ENCODE measurements at regions of chr5 and their contacts with region 1.

Region 1: GRCh38 chr5:158695595-158696330 is 404.0 kb downstream of the EBF1 start:
- DNase-seq: peak; percentile 72
- H3K4me3 Mint-ChIP-seq: no peak overlapping the region
- H3K27ac Mint-ChIP-seq: no peak overlapping the region
- H3K4me1 Mint-ChIP-seq: peaks cover 6% of the 10 kb centered on the region
- H3K27me3 Mint-ChIP-seq: peaks cover 22% of the 10 kb centered on the region
- CTCF ChIP-seq: peak; percentile 99

Region 2: DNA sequence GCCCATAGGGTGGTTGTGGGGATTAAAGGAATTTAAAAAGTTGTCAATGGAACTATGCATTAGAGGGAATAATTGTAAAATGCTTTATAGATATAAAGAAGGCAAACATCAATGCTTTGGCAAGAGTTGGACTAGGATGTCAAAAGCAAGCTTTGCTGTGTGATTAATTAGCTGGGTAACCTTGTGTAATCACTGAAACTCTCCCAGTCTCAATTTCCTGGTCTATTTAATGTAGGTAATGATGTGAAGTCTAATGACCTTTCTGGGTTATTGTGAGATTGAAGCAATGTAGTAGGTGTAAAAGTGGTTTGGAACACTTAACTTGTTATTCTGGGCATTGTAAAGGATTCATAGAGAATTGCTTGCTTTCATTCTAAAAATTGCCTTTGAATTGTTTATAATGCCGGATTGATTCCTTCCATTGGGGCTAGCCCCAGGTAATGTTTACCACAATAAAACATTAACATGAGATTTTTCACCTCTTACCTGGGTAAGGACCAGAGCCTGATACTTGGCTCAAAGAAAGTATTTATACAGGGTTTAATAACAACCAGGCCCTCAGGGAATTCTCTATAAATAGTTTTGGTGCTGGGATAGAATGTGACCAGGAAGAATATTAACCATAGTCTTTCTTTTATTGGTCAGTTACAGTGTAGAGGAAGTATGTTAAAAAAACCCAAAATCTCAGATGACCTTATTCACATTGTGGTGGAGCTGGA is 806.8 kb before region 1 on chr5:
- CTCF ChIA-PET with region 1: no interaction called
- POLR2A ChIA-PET with region 1: no interaction called
- intact Hi-C with region 1: no loop called
- DNase-seq: no peak
- H3K4me3 Mint-ChIP-seq: no peak overlapping the region
- H3K27ac Mint-ChIP-seq: no peak overlapping the region
- H3K4me1 Mint-ChIP-seq: peaks cover 13% of the 10 kb centered on the region
- H3K27me3 Mint-ChIP-seq: no peaks in the 10 kb centered on the region
- CTCF ChIP-seq: no peak

Region 3: DNA sequence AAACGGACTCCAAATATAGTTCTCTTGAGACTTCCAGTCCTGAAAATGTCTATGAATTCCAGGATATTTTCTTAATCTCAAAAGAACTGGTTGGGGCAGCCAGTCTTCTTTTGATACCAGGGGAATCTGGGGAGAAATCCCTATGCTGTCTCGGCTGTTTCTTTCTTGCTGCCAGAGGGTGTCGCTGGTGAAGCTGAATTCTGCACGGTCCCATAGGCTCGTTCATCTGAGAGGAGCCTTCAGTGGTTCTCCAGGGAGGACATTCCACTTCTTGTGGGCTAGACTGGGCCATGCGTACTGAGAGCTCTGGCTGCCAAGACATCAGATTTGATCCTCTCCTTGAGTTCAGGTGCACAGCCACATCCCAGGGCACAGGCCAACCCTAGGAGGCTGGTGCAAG is 681.8 kb before region 1 on chr5:
- CTCF ChIA-PET with region 1: interaction called, 4 read pairs
- POLR2A ChIA-PET with region 1: no interaction called
- intact Hi-C with region 1: loop called (anchors 1 kb)
- DNase-seq: peak; percentile 64
- H3K4me3 Mint-ChIP-seq: no peak overlapping the region
- H3K27ac Mint-ChIP-seq: no peak overlapping the region
- H3K4me1 Mint-ChIP-seq: no peaks in the 10 kb centered on the region
- H3K27me3 Mint-ChIP-seq: no peaks in the 10 kb centered on the region
- CTCF ChIP-seq: peak; percentile 68

Region 4: GRCh38 chr5:158511454-158511853 is 184.3 kb before region 1 on chr5:
- CTCF ChIA-PET with region 1: no interaction called
- POLR2A ChIA-PET with region 1: no interaction called
- intact Hi-C with region 1: no loop called
- DNase-seq: no peak
- H3K4me3 Mint-ChIP-seq: no peak overlapping the region
- H3K27ac Mint-ChIP-seq: no peak overlapping the region
- H3K4me1 Mint-ChIP-seq: peaks cover 15% of the 10 kb centered on the region
- H3K27me3 Mint-ChIP-seq: no peaks in the 10 kb centered on the region
- CTCF ChIP-seq: no peak

Region 5: GRCh38 chr5:158670201-158670600 is 25.6 kb before region 1 on chr5:
- CTCF ChIA-PET with region 1: interaction called, 11 read pairs
- POLR2A ChIA-PET with region 1: no interaction called
- intact Hi-C with region 1: no loop called
- DNase-seq: no peak
- H3K4me3 Mint-ChIP-seq: no peak overlapping the region
- H3K27ac Mint-ChIP-seq: no peak overlapping the region
- H3K4me1 Mint-ChIP-seq: no peaks in the 10 kb centered on the region
- H3K27me3 Mint-ChIP-seq: peaks cover 19% of the 10 kb centered on the region
- CTCF ChIP-seq: no peak

Region 6: GRCh38 chr5:158725297-158725851 is 29.6 kb after region 1 on chr5:
- CTCF ChIA-PET with region 1: interaction called, 27 read pairs
- POLR2A ChIA-PET with region 1: no interaction called
- intact Hi-C with region 1: no loop called
- DNase-seq: no peak
- H3K4me3 Mint-ChIP-seq: no peak overlapping the region
- H3K27ac Mint-ChIP-seq: no peak overlapping the region
- H3K4me1 Mint-ChIP-seq: peaks cover 8% of the 10 kb centered on the region
- H3K27me3 Mint-ChIP-seq: peaks cover 35% of the 10 kb centered on the region
- CTCF ChIP-seq: no peak

Region 7: GRCh38 chr5:159049844-159050315 is 354.1 kb after region 1 on chr5:
- CTCF ChIA-PET with region 1: interaction called, 7 read pairs
- POLR2A ChIA-PET with region 1: no interaction called
- intact Hi-C with region 1: loop called (anchors 2 kb)
- DNase-seq: peak; percentile 40
- H3K4me3 Mint-ChIP-seq: no peak overlapping the region
- H3K27ac Mint-ChIP-seq: no peak overlapping the region
- H3K4me1 Mint-ChIP-seq: peaks cover 12% of the 10 kb centered on the region
- H3K27me3 Mint-ChIP-seq: peaks cover 15% of the 10 kb centered on the region
- CTCF ChIP-seq: peak; percentile 27

Region 8: GRCh38 chr5:159112436-159112835 is 416.7 kb after region 1 on chr5:
- CTCF ChIA-PET with region 1: interaction called, 513 read pairs
- POLR2A ChIA-PET with region 1: interaction called, 48 read pairs
- intact Hi-C with region 1: no loop called
- DNase-seq: no peak
- H3K4me3 Mint-ChIP-seq: no peak overlapping the region
- H3K27ac Mint-ChIP-seq: no peak overlapping the region
- H3K4me1 Mint-ChIP-seq: no peaks in the 10 kb centered on the region
- H3K27me3 Mint-ChIP-seq: peaks cover 66% of the 10 kb centered on the region
- CTCF ChIP-seq: no peak

Region 9: GRCh38 chr5:159316519-159317383 is 621.0 kb after region 1 on chr5:
- CTCF ChIA-PET with region 1: no interaction called
- POLR2A ChIA-PET with region 1: no interaction called
- intact Hi-C with region 1: loop called (anchors 1 kb)
- DNase-seq: peak; percentile 77
- H3K4me3 Mint-ChIP-seq: no peak overlapping the region
- H3K27ac Mint-ChIP-seq: no peak overlapping the region
- H3K4me1 Mint-ChIP-seq: no peaks in the 10 kb centered on the region
- H3K27me3 Mint-ChIP-seq: no peaks in the 10 kb centered on the region
- CTCF ChIP-seq: peak; percentile 91

Measured in MCF 10A (cell line).